Panc1 (cell line): ENCODE measurements at regions of chr19 and their contacts with region 1.

Region 1: DNA sequence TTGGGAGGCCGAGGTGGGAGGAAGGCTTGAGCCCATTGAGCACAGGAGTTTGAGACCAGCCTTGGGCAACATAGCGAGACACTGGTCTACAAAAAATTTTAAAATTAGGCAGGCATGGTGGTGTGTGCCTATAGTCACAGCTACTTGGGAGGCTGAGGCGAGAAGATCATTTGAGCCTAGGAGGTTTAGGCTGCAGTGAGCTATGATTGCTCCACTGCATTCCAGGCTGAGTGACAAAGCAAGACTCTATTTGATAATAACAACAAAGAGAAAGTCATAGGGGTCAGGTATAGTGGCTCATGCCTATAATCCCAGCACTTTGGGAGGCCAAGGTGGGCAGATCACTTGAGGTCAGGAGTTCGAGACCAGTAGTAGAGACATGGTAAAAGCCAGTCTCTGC is 4.6 kb upstream of the SLC44A2 start:
- DNase-seq: no peak
- ATAC-seq: no peak
- H3K4me3 ChIP-seq: no peak overlapping the region
- H3K27ac ChIP-seq: no peak overlapping the region
- H3K4me1 ChIP-seq: peaks cover 6% of the 10 kb centered on the region
- H3K27me3 ChIP-seq: no peaks in the 10 kb centered on the region
- CTCF ChIP-seq: no peak

Region 2: GRCh38 chr19:10339380-10339960 is 281.3 kb before region 1 on chr19 and contains the start of gene ICAM3:
- CTCF ChIA-PET with region 1: no interaction called
- POLR2A ChIA-PET with region 1: no interaction called
- in situ Hi-C with region 1: no loop called
- intact Hi-C with region 1: no loop called
- DNase-seq: no peak
- ATAC-seq: no peak
- H3K4me3 ChIP-seq: no peak within 1 kb of the TSS
- H3K27ac ChIP-seq: no peak within 1 kb of the TSS
- H3K4me1 ChIP-seq: peaks cover 5% of the 10 kb centered on the region
- H3K27me3 ChIP-seq: no peaks in the 10 kb centered on the region
- CTCF ChIP-seq: no peak
- total RNA-seq, gene ICAM3: 10.5 TPM

Region 3: DNA sequence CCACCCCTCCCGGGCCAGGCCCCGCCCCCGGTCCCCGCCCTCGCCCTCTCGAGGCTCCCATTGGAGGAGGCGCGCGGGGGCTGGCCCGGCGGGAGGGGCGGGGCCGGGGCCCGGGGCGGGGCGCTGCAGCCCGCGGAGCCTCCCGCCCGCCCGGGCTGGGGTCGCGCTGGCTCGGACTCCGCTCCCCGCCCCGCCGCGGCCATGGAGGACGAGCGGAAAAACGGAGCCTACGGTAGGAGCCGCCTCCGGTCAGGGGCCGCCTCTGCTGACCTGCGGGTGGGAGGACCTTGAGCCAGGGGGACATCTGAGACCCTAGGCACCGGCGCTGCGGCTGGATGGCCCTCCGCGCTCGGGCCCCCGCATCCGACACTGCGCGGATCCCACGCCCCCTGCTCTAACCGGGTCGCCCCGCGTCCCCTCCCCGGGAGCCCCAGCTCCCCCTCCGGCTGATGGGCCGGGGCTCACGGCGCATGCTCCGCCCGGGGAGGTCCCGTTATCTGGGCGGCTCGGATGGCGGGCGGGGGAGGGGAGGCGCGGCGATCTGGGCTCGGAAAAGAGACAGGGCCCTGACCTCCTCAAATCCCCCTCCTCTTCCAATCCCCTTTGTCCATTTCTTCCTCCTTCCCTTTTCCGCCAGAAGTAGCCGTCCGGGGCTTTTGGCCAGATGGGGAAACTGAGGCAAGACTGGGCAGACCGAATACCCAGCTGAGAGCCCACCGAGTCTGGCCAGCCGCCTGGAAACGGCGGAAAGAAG is 18.3 kb before region 1 on chr19:
- CTCF ChIA-PET with region 1: no interaction called
- POLR2A ChIA-PET with region 1: interaction called, 13 read pairs
- in situ Hi-C with region 1: no loop called
- intact Hi-C with region 1: no loop called
- DNase-seq: no peak
- ATAC-seq: peak; percentile 98
- H3K4me3 ChIP-seq: peak overlapping the region; percentile 63 to 71
- H3K27ac ChIP-seq: peak overlapping the region; percentile 68
- H3K4me1 ChIP-seq: peaks cover 16% of the 10 kb centered on the region
- H3K27me3 ChIP-seq: no peaks in the 10 kb centered on the region
- CTCF ChIP-seq: no peak

Region 4: GRCh38 chr19:10636304-10636972 is 15.7 kb after region 1 on chr19:
- CTCF ChIA-PET with region 1: no interaction called
- POLR2A ChIA-PET with region 1: no interaction called
- in situ Hi-C with region 1: no loop called
- intact Hi-C with region 1: no loop called
- DNase-seq: no peak
- ATAC-seq: no peak
- H3K4me3 ChIP-seq: no peak overlapping the region
- H3K27ac ChIP-seq: no peak overlapping the region
- H3K4me1 ChIP-seq: no peaks in the 10 kb centered on the region
- H3K27me3 ChIP-seq: no peaks in the 10 kb centered on the region
- CTCF ChIP-seq: no peak

Region 5: DNA sequence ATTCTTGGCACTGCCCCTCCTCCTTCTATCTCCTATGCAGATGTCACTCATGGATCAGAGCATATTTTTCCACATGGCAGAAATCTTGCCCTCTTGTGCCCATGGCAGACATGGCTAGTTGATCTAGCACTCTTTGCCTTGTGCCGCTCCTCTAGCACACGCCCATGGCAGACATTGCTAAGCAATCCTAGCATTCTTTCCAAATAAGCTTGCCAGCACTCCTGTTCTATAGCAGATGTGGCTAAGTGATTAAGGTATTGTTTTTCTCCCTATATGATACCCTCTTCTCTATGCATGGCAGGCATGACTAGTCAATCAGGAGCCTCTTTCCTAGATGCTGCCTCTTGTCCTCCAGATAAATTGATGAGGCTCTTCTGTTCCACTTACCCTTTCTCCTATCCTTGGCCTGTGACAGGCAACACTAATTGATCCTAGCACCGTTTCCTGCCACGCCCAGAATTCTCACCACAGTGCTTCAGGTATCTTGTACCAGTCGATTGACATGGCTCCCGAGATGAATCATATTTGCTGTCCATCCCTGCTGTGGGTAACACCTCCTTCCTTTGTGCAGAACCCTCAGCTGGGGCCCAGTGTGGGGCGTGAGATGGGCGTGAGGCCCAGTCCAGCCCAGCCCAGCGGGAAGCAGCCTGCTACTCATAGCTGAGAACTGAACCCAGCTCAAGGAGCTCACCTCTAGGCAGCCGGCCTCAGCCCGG is 188.3 kb after region 1 on chr19:
- CTCF ChIA-PET with region 1: no interaction called
- POLR2A ChIA-PET with region 1: interaction called, 11 read pairs
- in situ Hi-C with region 1: no loop called
- intact Hi-C with region 1: no loop called
- DNase-seq: no peak
- ATAC-seq: peak; percentile 33; the same call in 1 of the 2 replicates
- H3K4me3 ChIP-seq: no peak overlapping the region
- H3K27ac ChIP-seq: no peak overlapping the region
- H3K4me1 ChIP-seq: no peaks in the 10 kb centered on the region
- H3K27me3 ChIP-seq: no peaks in the 10 kb centered on the region
- CTCF ChIP-seq: no peak